Sciatic nerve (tissue), 2 donors: ENCODE measurements at regions of chr10 and their contacts with region 1.

Region 1: DNA sequence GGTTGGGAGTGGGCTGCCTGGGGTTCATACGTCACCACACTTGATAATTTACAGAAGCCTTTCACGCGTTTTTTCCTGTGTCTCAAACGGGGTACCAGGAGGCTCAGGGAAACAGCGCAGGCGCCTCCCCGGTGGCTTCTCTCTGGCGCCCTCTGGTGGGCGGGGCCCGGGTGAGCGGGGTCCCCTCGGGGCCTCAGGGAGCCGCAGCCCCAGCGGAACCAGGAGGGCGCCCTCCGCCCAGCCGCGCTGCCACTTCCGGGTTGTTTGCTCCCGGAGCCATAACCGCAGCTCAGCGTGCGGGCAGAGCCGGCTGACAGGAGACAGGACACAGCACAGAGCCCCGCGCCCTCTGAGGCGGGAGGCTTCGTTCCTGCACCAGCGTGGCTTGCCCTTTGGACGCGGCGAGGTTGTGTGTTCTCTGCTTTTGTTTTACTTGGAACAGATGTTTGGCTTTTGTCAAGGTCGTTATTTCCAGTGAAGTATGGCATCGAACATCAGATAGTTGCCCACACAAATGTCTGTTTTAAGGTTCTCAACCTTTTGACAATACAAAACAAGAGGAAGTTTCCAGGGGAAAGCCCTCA is 6.9 kb upstream of the CYP2E1 start:
- DNase-seq: peak; percentile 88
- ATAC-seq: peak; percentile 93

Region 2: GRCh38 chr10:132588301-132589013 is 931.8 kb before region 1 on chr10:
- intact Hi-C with region 1: no loop called
- DNase-seq: peak; percentile 58
- ATAC-seq: peak; percentile 49

Region 3: DNA sequence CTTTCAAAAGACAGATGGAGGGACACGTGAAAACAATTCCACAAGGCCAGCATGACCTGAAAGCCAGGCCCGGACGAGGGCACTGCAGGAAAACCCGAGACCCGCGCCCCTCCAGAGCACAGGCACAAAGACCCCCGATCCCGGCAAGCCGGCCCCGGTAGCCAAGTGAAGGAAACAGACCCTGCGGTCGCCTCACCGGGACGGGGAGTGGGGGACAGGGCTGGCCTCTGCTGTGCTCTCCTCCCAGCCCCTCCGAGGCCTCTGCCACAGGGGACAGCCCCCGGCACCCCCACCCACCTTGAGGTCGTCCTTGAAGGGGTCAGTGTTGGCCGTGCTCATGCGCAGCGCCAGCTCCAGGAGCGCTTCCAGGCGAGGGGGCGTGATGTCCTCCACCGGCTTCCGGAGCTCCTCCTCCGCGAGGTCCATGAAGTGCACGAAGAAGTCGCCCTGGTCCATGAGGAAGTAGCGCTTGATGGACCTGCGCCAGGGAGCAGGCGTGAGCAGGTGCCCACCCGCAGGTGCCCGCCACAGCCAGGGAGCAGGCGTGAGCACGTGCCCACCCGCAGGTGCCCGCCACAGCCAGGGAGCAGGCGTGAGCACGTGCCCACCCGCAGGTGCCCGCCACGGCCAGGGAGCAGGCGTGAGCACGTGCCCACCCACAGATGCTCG is 232.3 kb before region 1 on chr10:
- intact Hi-C with region 1: no loop called
- DNase-seq: no peak
- ATAC-seq: no peak

Region 4: DNA sequence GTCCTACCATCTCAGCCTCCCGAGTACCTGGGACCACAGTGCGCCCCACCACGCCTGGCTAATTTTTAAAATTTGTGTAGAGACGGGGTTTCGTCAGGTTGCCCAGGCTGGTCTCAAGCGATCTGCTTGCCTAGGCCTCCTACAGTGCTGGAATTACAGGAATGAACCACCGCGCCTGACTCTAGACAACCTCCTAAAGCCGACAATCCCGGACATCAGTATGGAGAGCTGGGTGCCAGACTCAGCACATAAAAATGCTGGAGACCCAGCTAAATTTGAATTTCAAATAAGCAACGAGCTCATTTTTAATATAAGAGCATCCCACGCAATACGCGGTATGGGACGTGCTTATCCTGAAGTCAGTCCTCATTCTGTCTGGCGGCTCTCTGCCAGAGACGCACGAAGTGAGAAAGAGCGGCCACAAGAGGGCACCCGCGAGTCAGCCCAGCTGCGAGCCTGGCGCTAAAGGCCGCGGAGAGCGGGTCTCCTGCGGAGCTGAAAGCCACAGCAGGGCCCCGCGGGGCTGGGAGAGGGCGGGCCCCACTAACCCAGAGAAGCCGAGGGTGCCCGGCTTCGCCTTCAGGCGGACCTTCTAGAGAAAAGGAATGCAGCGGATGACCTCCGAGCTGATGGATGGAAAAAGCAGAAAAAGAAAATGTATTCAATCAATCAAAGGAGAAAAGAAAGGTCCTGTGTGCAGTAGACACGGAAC is 190.6 kb before region 1 on chr10:
- intact Hi-C with region 1: loop called (anchors 10 kb)
- DNase-seq: peak; percentile 94
- ATAC-seq: peak; percentile 88